ENCODE measurements at regions of chr1 and their contacts with region 1.

Region 1: GRCh38 chr1:52569449-52570210 is 16.7 kb upstream of the TUT4 start:
- DNase-seq: no peak
- ATAC-seq: peak; percentile 34
- H3K4me3 Mint-ChIP-seq: peak overlapping the region; percentile 0
- H3K27ac Mint-ChIP-seq: peak overlapping the region; percentile 0
- H3K4me1 Mint-ChIP-seq: peaks cover 32% of the 10 kb centered on the region
- H3K27me3 Mint-ChIP-seq: no peaks in the 10 kb centered on the region
- CTCF ChIP-seq: no peak

Region 2: GRCh38 chr1:52534928-52535764 is 34.5 kb before region 1 on chr1:
- CTCF ChIA-PET with region 1: no interaction called
- POLR2A ChIA-PET with region 1: interaction called, 4 read pairs
- intact Hi-C with region 1: loop called (anchors 5 kb)
- DNase-seq: no peak
- ATAC-seq: no peak
- H3K4me3 Mint-ChIP-seq: no peak overlapping the region
- H3K27ac Mint-ChIP-seq: no peak overlapping the region
- H3K4me1 Mint-ChIP-seq: peaks cover 74% of the 10 kb centered on the region
- H3K27me3 Mint-ChIP-seq: no peaks in the 10 kb centered on the region
- CTCF ChIP-seq: no peak

Region 3: DNA sequence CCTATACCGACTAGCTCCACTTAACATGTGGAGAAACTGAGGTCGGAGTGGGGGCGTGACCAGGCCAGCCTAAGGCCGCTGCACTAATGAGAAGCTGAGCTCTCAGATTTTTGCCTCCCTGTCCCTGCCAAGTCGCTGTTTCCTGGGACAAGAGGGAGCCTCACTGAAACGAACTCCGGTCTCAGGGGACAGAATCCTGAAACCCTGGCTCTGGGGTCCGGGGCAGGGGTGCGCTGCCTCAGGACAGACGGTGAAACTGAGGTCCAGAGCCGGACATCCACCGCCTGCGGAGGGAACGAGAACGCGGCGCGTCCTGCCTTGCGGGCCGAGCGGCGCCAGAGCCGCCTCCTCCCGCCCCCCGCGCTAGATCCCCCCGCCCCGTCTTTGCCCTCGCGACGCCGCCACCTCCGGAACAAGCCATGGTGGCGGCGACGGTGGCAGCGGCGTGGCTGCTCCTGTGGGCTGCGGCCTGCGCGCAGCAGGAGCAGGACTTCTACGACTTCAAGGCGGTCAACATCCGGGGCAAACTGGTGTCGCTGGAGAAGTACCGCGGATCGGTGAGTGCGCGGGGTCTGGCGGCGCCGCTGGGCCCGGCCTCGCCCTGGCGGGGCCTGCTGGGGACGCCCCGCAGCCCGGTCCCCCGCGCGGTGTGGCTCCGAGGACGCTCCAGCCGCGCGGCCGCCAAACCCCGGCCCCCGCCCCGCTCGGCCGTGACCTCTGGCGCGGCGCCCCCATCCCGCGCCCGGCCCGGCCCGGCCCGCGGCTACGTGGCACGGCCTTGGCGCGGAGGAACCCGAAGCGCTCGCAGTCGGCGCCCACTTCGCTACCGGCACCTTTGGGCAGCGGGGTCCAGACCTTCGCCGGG is 32.6 kb after region 1 on chr1 and contains the start of gene GPX7:
- CTCF ChIA-PET with region 1: interaction called, 3 read pairs
- POLR2A ChIA-PET with region 1: interaction called, 8 read pairs
- intact Hi-C with region 1: loop called (anchors 5 kb)
- DNase-seq: peak; percentile 57
- ATAC-seq: peak; percentile 75
- H3K4me3 Mint-ChIP-seq: peak within 1 kb of the TSS; percentile 84
- H3K27ac Mint-ChIP-seq: peak within 1 kb of the TSS; percentile 84
- H3K4me1 Mint-ChIP-seq: peaks cover 55% of the 10 kb centered on the region
- H3K27me3 Mint-ChIP-seq: no peaks in the 10 kb centered on the region
- CTCF ChIP-seq: no peak
- total RNA-seq, gene GPX7: 20.9 and 22.4 TPM in 2 replicates

Region 4: GRCh38 chr1:52636721-52637695 is 67.4 kb after region 1 on chr1:
- CTCF ChIA-PET with region 1: no interaction called
- POLR2A ChIA-PET with region 1: no interaction called
- intact Hi-C with region 1: no loop called
- DNase-seq: peak; percentile 67
- ATAC-seq: peak; percentile 69
- H3K4me3 Mint-ChIP-seq: peak overlapping the region; percentile 81
- H3K27ac Mint-ChIP-seq: peak overlapping the region; percentile 99
- H3K4me1 Mint-ChIP-seq: peaks cover 90% of the 10 kb centered on the region
- H3K27me3 Mint-ChIP-seq: no peaks in the 10 kb centered on the region
- CTCF ChIP-seq: no peak

Measured in activated B cell treated with CpG ODN at 0.5 μM for 24 hours (primary cell).